Activated CD8-positive, alpha-beta T cell treated with anti-CD3 and anti-CD28 coated beads for 36 hours (primary cell): ENCODE measurements at regions of chr1 and their contacts with region 1.

Region 1: DNA sequence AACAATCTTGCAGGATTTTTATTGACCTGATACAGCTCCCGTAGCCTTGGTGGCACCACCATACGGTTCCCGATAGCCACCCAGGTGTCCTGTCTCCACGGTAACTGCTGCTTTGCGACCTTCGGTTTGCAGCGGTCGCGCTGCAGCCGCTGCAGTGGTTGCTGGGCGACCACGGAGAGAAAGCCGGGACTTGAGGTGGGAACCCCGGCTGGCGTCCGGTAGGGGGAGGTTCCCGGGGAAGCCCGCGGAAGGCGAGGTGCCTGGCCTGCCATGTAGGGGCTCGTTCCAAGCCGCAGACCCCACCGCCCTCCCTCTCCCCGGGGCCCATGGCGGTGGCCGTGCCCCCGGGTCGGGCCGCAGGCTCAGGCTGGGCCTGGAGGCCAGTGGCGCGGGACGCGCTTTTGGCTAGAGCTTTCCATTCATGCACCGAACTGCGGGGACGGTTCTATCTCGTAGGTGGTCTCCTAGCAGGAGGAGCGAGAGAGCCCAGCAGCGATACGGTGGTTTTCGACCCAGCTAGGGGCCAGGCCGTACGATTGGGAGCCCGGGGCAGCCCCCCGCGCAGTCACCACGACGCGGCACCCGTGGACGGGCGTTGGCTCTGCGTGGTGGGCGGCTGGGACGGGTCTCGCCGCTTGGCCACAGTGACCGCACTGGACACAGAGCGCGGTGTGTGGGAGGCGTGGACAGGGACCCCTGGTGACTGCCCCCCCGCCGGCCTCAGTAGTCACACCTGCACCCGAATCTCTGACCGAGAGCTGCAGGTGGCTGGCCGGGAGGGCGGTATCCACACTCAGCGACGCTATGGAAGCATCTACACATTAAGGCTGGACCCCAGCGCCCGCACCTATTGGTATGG is at the start of gene KLHDC9:
- DNase-seq: peak; percentile 86
- ATAC-seq: peak; percentile 82
- H3K4me3 Mint-ChIP-seq: peak within 1 kb of the TSS; percentile 83
- H3K27ac Mint-ChIP-seq: peak within 1 kb of the TSS; percentile 87
- H3K4me1 Mint-ChIP-seq: peaks cover 45% of the 10 kb centered on the region
- H3K27me3 Mint-ChIP-seq: no peaks in the 10 kb centered on the region
- CTCF ChIP-seq: no peak
- total RNA-seq, gene KLHDC9: 0.43 TPM in 1 of 2 experiments, not detected in the other

Region 2: DNA sequence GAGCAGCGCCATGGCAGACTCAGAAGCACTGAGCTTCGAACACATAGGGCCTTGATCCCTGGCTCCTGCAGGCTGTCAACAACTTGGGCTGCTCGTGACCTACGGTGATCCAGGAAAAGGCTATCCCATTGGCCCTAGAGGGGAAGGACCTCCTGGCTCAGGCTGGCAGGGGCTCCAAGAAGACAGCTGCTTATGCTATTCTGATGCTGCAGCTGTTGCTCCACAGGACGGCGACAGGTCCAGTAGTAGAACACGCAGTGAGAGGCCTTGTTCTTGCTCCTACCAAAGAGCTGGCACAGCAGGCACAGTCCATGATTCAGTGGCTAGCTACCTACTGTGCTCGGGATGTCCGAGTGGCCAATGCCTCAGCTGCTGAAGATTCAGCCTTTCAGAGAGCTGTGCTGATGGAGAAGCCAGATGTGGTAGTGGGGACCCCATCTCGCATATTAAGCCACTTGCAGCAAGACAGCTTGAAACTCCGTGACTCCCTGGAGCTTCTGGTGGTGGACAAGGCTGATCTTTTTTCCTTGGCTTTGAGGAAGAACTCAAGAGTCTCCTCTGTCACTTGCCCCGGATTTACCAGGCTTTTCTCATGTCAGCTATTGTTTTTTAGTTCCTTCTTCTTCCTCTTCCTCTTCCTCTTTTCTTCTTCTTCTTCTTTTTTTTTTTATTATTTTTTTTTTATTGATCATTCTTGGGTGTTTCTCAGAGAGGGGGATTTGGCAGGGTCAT is 162.7 kb before region 1 on chr1:
- CTCF ChIA-PET with region 1: no interaction called
- POLR2A ChIA-PET with region 1: no interaction called
- intact Hi-C with region 1: no loop called
- DNase-seq: no peak
- ATAC-seq: no peak
- H3K4me3 Mint-ChIP-seq: no peak overlapping the region
- H3K27ac Mint-ChIP-seq: no peak overlapping the region
- H3K4me1 Mint-ChIP-seq: no peaks in the 10 kb centered on the region
- H3K27me3 Mint-ChIP-seq: peaks cover 3% of the 10 kb centered on the region
- CTCF ChIP-seq: no peak

Region 3: GRCh38 chr1:160987359-160988062 is 110.9 kb before region 1 on chr1:
- CTCF ChIA-PET with region 1: interaction called, 16 read pairs
- POLR2A ChIA-PET with region 1: no interaction called
- intact Hi-C with region 1: no loop called
- DNase-seq: no peak
- ATAC-seq: no peak
- H3K4me3 Mint-ChIP-seq: no peak overlapping the region
- H3K27ac Mint-ChIP-seq: no peak overlapping the region
- H3K4me1 Mint-ChIP-seq: peaks cover 2% of the 10 kb centered on the region
- H3K27me3 Mint-ChIP-seq: peaks cover under 1% of the 10 kb centered on the region
- CTCF ChIP-seq: no peak

Region 4: DNA sequence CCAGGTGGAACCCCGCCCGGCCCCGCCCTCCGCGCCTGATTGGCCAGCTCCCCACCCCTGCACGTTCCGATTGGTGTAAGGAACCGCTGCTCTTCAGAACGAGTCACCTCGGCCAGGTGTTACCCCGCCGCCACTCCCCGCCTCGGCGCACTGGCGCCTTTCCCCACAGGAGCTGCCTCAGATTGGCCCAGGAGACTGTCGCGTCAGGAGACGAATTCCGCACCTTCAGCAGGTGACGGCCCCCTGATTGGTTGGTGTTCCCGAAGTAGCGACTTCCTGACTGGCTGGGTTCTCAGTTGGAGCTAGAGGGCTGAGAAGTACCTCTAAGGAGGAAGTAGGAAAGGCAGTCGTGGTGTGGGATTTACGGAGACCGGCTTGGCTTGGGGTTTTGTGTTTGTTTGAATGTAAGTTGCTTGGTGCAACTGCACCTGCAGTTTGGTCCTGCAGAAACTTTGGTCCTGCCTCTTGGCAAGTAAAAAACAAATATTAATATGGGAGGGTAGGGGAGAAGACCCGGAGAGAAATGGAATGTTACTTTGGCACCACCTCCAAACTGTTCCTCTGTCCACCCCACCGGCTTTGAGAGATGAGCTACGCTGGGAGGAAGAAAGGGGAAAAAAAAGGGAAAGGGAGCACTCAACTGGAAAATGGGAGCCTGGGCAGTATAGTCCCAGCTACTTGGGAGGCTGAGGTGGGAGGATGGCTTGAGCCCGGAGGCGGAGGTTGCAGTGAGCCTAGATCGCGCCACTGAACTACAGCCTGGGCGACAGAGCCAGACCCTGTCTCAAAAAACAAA is 77.1 kb before region 1 on chr1:
- CTCF ChIA-PET with region 1: interaction called, 11 read pairs
- POLR2A ChIA-PET with region 1: interaction called, 6 read pairs
- intact Hi-C with region 1: no loop called
- DNase-seq: peak; percentile 90
- ATAC-seq: peak; percentile 95
- H3K4me3 Mint-ChIP-seq: peak overlapping the region; percentile 87
- H3K27ac Mint-ChIP-seq: peak overlapping the region; percentile 81
- H3K4me1 Mint-ChIP-seq: peaks cover 39% of the 10 kb centered on the region
- H3K27me3 Mint-ChIP-seq: no peaks in the 10 kb centered on the region
- CTCF ChIP-seq: no peak

Region 5: DNA sequence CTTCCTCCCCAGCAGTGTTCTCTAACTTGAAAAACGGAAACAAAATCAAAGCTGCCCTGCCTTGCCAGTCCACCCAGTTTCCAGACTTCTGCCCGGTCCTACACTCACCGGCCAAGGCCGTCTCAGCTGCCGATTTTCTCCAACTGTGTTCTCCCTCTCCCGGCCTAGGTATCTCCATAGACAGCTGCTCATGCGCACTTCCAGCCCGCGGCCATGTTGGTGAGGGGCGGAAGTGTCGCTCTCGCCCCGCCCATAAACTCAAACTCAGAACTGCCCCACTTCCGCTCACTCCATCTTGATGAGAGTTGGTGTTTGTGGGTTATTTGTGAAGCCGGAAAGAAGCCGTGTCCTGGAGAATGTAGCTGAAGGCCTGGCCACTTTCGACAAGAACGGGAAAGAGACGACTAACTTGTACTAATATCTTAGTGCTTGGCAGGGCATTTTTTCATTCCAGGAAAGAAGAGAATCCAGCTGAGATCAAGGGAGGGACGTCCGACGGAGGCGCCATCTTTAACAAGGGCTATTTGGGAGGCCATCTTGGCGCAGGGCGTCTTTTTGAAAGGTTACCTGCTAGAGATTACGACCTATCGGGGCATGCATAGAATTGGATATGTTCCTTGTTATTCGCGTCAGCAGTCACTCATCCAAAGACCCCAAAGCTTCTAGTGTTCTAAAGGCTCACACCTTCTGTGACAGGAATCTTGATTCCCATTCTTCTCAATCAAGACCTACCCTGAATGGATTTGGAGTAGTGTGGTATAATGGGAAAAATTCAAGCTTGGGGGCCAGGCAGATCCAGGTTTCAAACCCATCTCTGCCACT is 52.5 kb before region 1 on chr1 and contains the start of gene USF1:
- CTCF ChIA-PET with region 1: interaction called, 79 read pairs
- POLR2A ChIA-PET with region 1: interaction called, 32 read pairs
- intact Hi-C with region 1: loop called (anchors 2 kb)
- DNase-seq: peak; percentile 96
- ATAC-seq: peak; percentile 83
- H3K4me3 Mint-ChIP-seq: peak within 1 kb of the TSS; percentile 84
- H3K27ac Mint-ChIP-seq: peak within 1 kb of the TSS; percentile 98
- H3K4me1 Mint-ChIP-seq: peaks cover 36% of the 10 kb centered on the region
- H3K27me3 Mint-ChIP-seq: no peaks in the 10 kb centered on the region
- CTCF ChIP-seq: no peak
- total RNA-seq, gene USF1: 50.0 to 52.1 TPM

Region 6: DNA sequence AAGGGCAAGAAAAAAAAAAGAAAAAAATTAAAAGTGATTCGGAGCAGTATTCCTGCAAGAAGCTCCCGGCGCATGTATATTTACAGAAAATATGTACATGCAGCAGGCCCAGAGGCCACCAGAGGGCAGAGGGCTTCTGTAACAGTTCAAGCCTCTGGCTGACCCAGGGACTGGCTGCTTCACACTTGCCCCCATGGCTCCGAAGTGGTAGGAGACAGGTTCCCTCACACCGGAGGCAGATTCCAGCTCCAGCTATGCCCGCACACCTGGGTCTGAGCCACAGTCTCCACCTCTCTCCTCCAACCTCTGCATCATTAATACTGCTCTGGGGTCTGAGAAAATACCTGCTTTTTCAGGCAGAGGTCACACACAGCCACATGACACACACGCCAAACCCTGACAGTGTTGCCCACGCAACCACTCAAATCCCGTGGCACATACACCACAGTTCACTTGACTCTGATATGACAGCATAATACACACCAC is 26.5 kb before region 1 on chr1:
- CTCF ChIA-PET with region 1: interaction called, 200 read pairs
- POLR2A ChIA-PET with region 1: interaction called, 57 read pairs
- intact Hi-C with region 1: loop called (anchors 5 kb)
- DNase-seq: peak; percentile 81
- ATAC-seq: no peak
- H3K4me3 Mint-ChIP-seq: no peak overlapping the region
- H3K27ac Mint-ChIP-seq: peak overlapping the region; percentile 30
- H3K4me1 Mint-ChIP-seq: peaks cover 34% of the 10 kb centered on the region
- H3K27me3 Mint-ChIP-seq: no peaks in the 10 kb centered on the region
- CTCF ChIP-seq: peak; percentile 81

Region 7: GRCh38 chr1:161117759-161118581 is 19.5 kb after region 1 on chr1 and contains the starts of genes NIT1 and PFDN2:
- CTCF ChIA-PET with region 1: interaction called, 30 read pairs
- POLR2A ChIA-PET with region 1: interaction called, 26 read pairs
- intact Hi-C with region 1: no loop called
- DNase-seq: peak; percentile 92
- ATAC-seq: peak; percentile 62
- H3K4me3 Mint-ChIP-seq: peak within 1 kb of the TSS; percentile 94
- H3K27ac Mint-ChIP-seq: peak within 1 kb of the TSS; percentile 92
- H3K4me1 Mint-ChIP-seq: peaks cover 70% of the 10 kb centered on the region
- H3K27me3 Mint-ChIP-seq: no peaks in the 10 kb centered on the region
- CTCF ChIP-seq: no peak
- total RNA-seq, gene NIT1: 38.5 to 40.0 TPM
- total RNA-seq, gene PFDN2: 137 to 144 TPM

Region 8: DNA sequence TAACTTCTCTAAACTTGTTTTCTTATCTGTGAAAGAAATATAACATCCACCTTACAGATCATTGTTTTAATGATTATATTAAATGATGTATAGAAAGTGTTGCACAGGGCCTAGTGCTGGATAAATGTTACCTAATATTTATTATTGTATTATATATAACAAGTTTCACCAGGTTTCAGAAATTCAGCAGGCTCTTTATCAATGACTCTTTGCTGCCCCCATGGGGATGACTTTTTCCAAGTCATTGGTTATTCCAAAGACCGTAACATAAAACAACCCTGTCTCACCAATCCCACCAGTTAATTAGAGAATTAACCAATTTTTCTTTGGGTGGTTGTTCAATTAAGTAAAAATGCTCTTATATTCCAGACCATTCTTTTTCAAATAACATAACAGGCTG is 41.3 kb after region 1 on chr1:
- CTCF ChIA-PET with region 1: interaction called, 15 read pairs
- POLR2A ChIA-PET with region 1: interaction called, 4 read pairs
- intact Hi-C with region 1: no loop called
- DNase-seq: peak; percentile 65
- ATAC-seq: no peak
- H3K4me3 Mint-ChIP-seq: no peak overlapping the region
- H3K27ac Mint-ChIP-seq: no peak overlapping the region
- H3K4me1 Mint-ChIP-seq: peaks cover 6% of the 10 kb centered on the region
- H3K27me3 Mint-ChIP-seq: no peaks in the 10 kb centered on the region
- CTCF ChIP-seq: peak; percentile 74